Vagina (tissue), 2 donors: ENCODE measurements at regions of chr1 and their contacts with region 1.

Region 1: GRCh38 chr1:41416552-41417334 is 55.5 kb downstream of the FOXO6 start:
- DNase-seq: no peak
- H3K4me3 ChIP-seq: no peak overlapping the region
- H3K27ac ChIP-seq: peak overlapping the region; percentile 1
- H3K4me1 ChIP-seq: peaks cover 41% of the 10 kb centered on the region
- H3K27me3 ChIP-seq: no peaks in the 10 kb centered on the region
- CTCF ChIP-seq: peak; percentile 72 to 85 (median 79)
- POLR2A ChIP-seq: no peak

Region 2: GRCh38 chr1:41282679-41283317 is 133.9 kb before region 1 on chr1:
- intact Hi-C with region 1: loop called (anchors 5 kb)
- DNase-seq: no peak
- H3K4me3 ChIP-seq: no peak overlapping the region
- H3K27ac ChIP-seq: no peak overlapping the region
- H3K4me1 ChIP-seq: no peaks in the 10 kb centered on the region
- H3K27me3 ChIP-seq: no peaks in the 10 kb centered on the region
- CTCF ChIP-seq: peak in 2 of 3 experiments; percentile 51 to 59
- POLR2A ChIP-seq: no peak